ENCODE measurements at regions of chr12 and their contacts with region 1.

Region 1: DNA sequence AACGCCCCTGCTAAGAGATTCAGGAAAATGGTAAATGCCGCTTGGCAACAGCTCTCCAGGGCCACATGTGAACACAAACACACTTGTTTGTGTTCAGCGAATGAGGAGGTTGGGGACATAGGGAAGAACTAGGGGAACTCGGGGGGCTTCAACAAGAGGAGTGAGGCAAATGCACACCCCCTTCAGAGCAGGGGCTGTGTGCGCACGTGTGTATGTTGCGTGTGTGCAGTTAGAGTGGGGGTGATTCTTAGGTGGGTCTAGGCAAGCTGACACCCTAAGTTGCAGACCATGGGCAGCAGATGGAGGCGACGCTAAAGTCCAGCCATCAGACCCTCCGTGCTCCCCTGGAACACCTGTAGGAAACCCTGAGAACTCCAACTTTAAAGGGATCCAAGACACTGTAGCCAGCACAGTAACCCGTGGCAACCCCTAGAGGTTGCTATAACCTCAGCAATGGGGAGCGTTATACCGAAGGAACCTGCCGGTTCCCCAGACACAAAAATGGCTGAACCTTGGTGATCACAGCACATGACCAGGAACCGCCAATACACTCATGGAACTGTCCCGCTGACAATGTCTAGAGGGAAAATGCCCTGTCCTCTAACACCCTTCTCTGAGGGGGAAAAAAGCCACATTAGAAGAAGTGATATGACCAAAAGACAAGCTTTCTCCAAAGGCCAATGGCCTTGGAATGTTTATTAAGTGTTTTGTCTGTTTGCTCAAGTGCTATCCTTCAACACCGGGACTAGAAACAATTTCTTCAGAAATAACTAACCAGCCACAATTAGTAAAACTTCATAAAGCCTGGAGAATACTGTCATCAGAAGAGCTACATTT is 86.5 kb upstream of the CEP83 start:
- DNase-seq: peak in 4 of 5 donors; percentile 65 to 83 (median 74)
- H3K4me3 ChIP-seq: no peak overlapping the region
- H3K27ac ChIP-seq: no peak overlapping the region
- H3K4me1 ChIP-seq: no peaks in the 10 kb centered on the region
- H3K27me3 ChIP-seq: no peaks in the 10 kb centered on the region
- CTCF ChIP-seq: peak; percentile 84

Region 2: DNA sequence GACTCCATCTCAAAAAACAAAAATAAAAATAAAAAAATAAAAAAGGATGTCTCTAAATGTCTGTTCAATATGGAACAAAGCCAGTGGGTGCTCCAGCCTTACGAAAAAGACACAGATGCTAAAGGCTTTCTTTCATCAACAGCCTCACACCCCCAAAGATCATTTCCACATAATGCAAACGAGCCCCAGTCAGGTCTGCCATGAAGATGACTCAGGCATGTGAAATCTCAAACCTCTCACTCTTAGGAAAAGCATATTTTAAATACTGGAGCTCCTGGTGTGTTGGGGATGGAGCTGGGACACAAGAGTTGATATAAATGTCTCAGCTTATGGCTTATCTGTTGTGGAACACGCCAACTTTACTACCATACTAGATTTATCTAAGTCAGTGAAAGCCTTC is 447.7 kb before region 1 on chr12:
- intact Hi-C with region 1: no loop called
- DNase-seq: no peak
- H3K4me3 ChIP-seq: no peak overlapping the region
- H3K27ac ChIP-seq: no peak overlapping the region
- H3K4me1 ChIP-seq: peaks cover 0 to 6% (median 0%) of the 10 kb centered on the region in 3 donors
- H3K27me3 ChIP-seq: no peaks in the 10 kb centered on the region
- CTCF ChIP-seq: no peak

Region 3: GRCh38 chr12:94488463-94488862 is 57.7 kb before region 1 on chr12:
- intact Hi-C with region 1: no loop called
- DNase-seq: peak in 1 of 5 donors; percentile 10
- H3K4me3 ChIP-seq: no peak overlapping the region
- H3K27ac ChIP-seq: no peak overlapping the region
- H3K4me1 ChIP-seq: no peaks in the 10 kb centered on the region
- H3K27me3 ChIP-seq: no peaks in the 10 kb centered on the region
- CTCF ChIP-seq: no peak

Region 4: DNA sequence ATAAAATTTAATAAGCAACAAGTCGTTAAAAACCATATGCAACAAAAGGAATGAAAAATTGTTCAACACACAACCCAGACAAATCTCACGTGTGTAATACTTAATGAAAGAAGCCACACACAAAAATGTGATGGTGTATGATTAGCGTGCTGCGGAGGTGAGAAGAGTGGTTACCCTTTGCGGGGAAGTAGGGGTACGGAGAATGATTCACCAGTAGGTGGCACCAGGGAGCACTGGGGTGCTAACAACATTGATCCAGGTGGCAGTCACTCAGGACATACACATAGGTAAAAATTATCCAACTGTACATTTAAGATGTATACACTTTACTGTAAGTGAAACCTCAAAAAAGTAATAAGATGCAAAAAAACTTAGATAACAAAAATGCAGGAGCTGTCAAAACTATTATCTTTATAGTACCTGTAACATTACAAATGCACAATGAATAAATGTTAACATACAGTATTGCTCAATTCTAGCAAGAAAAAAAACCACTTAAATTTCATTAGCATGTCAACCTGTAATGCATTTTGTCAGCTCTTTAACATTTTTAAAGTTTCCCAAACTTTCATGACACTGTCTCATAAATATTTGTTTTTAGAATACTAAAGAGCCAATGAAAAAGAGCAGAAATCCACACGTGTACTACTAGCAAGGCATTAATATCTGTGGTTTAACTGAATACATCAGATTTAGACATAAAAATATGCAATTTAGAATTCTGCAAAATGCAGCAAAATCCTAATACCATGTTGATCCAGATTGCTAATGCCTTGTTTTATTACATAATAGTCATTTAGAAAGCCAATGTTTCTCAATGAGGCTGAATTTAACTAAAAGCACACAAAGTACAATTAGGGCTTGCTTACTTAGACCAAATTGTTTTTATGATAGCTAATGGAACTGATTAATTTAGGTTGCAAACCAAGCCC is 57.5 kb after region 1 on chr12:
- intact Hi-C with region 1: no loop called
- DNase-seq: no peak
- H3K4me3 ChIP-seq: no peak overlapping the region
- H3K27ac ChIP-seq: no peak overlapping the region
- H3K4me1 ChIP-seq: no peaks in the 10 kb centered on the region
- H3K27me3 ChIP-seq: no peaks in the 10 kb centered on the region
- CTCF ChIP-seq: peak; percentile 35

Region 5: GRCh38 chr12:94762259-94762942 is 216.2 kb after region 1 on chr12:
- intact Hi-C with region 1: loop called (anchors 10 kb)
- DNase-seq: no peak
- H3K4me3 ChIP-seq: no peak overlapping the region
- H3K27ac ChIP-seq: no peak overlapping the region
- H3K4me1 ChIP-seq: peaks cover 0 to 3% (median 0%) of the 10 kb centered on the region in 3 donors
- H3K27me3 ChIP-seq: no peaks in the 10 kb centered on the region
- CTCF ChIP-seq: no peak

Measured in kidney (tissue), 22 donors.